Natural killer cell (primary cell): ENCODE measurements at regions of chr12 and their contacts with region 1.

Region 1: DNA sequence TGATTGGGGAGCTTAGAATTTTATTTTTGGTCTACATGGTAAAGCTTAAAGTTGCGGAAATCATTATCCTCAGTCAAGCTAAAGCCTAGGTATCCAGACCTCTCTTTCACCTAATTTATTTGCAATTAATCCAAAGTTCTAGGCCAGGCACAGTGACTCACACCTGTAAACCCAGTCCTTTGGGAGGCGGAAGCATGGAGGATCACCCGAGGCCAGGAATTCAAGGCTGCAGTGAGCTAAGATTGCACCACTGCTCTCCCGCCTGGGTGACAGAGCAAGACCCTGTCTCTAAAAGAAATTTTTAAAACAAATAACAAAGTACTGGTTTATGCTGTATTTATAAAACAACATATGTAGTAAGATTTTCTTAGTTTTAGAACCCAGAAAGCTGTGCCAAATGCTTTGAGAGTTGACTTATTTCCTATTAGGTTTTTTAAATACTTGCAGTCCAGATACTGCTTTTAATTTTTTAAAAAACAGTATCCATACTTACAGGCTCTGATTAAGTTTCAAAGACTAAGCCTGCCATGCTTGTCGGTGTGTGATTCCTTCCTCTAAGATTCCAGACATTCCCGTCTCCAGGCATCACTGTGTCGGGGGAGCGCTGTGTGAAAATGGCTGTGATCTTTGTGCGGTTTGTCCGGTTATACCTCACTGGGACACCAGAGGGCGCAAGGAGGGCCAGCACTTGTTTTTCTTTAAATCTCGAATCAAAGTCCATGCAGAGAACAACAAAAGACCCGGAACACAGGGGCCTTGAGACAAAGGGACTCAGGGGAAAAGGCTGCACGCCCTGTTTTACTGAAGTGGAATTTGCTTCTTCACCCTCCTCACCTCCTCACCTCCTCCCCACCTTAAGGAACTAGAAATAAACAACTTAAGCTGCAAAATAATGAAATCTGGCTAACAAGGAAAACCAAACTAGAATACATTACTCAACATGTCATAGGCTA is 24.6 kb upstream of the TMPO start:
- DNase-seq: peak; percentile 81 to 92
- ATAC-seq: peak; percentile 90 to 99 (median 98)
- H3K4me3 ChIP-seq: no peak overlapping the region
- H3K4me3 Mint-ChIP-seq: no peak overlapping the region
- H3K27ac ChIP-seq: peak overlapping the region; percentile 42
- H3K27ac Mint-ChIP-seq: peak overlapping the region; percentile 45 to 75
- H3K4me1 ChIP-seq: peaks cover 5% of the 10 kb centered on the region
- H3K4me1 Mint-ChIP-seq: peaks cover 0 to 4% of the 10 kb centered on the region in 2 donors
- H3K27me3 ChIP-seq: no peaks in the 10 kb centered on the region
- H3K27me3 Mint-ChIP-seq: peaks cover 2 to 4% of the 10 kb centered on the region in 2 donors
- CTCF ChIP-seq: peak; percentile 78

Region 2: DNA sequence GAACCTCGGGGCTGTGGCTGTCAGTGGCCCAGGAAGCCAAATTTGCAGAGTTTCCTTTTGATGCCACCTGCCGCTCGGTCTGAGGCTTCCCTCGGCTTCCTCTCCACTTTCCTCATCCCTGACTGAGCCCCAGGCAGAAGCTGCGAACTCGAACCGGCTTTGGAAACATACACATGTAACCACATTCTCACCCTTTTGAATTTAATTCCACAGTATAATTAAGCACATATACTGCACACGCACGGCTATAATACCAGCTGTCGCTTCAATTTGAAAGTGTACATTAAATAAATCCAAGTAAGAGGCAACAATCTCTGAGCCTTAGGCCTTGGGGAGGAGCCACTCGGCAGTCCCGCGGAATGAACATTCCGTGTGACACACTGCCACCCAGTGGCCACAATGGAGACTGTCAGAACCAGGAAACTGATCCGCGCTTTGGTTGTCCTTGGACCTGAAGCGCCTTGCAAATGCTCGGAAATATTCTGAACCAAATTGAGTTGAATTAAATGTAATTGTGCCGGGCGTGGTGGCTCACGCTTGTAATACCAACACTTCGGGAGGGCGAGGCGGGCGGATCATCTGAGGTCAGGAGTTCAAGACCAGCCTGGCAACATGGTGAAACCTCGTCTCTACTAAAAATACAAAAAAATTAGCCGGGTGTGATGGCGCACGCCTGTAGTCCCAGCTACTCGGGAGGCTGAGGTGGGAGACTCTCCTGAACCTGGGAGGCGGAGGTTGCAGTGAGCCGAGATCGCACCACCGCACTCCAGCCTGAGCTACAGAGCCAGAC is 93.3 kb before region 1 on chr12:
- intact Hi-C with region 1: no loop called
- DNase-seq: peak; percentile 69 to 90
- ATAC-seq: peak; percentile 91 to 97 (median 95)
- H3K4me3 ChIP-seq: peak overlapping the region; percentile 20
- H3K4me3 Mint-ChIP-seq: peak overlapping the region; percentile 94
- H3K27ac ChIP-seq: peak overlapping the region; percentile 5
- H3K27ac Mint-ChIP-seq: peak overlapping the region; percentile 57 to 82
- H3K4me1 ChIP-seq: peaks cover 21% of the 10 kb centered on the region
- H3K4me1 Mint-ChIP-seq: peaks cover 21 to 23% of the 10 kb centered on the region in 2 donors
- H3K27me3 ChIP-seq: no peaks in the 10 kb centered on the region
- H3K27me3 Mint-ChIP-seq: peaks cover 3 to 6% of the 10 kb centered on the region in 2 donors
- CTCF ChIP-seq: peak; percentile 82

Region 3: DNA sequence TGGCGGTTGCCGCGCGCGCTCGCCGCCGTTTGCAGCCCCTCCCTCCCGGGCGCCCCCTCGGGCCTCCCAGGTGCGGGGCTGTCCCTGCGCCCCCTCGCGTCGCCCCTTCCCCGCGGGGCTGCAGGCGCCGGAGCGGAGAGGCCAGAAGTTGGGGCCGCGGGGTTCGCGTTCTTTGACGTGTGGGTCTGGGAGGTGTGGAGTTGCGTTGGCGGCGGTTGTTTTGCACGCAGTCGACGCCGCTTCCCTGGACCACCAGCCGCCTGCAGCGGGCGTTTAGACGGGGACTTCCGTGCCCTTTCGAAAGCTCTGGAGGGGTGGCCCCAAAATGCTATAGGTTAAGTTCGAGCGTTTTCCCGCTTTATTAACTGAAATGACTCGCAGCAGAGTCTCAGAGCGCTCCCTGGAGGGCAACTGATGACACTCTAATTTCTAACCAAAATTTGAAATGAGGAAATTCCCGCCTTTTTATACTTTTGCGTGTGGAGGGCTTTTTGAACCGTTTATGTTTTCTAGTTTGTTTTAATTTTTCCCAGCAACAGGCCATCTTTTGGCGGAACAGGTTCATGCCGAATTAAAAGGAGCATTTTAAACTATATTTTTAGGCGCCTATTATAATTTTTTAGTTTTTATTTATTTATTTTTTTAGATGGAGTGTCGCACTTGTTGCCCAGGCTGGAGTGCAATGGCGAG is 25.6 kb after region 1 on chr12:
- intact Hi-C with region 1: loop called (anchors 1 kb)
- DNase-seq: peak; percentile 67 to 94
- ATAC-seq: peak; percentile 68 to 82 (median 69)
- H3K4me3 ChIP-seq: peak overlapping the region; percentile 49
- H3K4me3 Mint-ChIP-seq: peak overlapping the region; percentile 99
- H3K27ac ChIP-seq: peak overlapping the region; percentile 75
- H3K27ac Mint-ChIP-seq: peak overlapping the region; percentile 94 to 97
- H3K4me1 ChIP-seq: peaks cover 33% of the 10 kb centered on the region
- H3K4me1 Mint-ChIP-seq: peaks cover 31 to 36% of the 10 kb centered on the region in 2 donors
- H3K27me3 ChIP-seq: no peaks in the 10 kb centered on the region
- H3K27me3 Mint-ChIP-seq: no peaks in the 10 kb centered on the region
- CTCF ChIP-seq: peak; percentile 76

Region 4: DNA sequence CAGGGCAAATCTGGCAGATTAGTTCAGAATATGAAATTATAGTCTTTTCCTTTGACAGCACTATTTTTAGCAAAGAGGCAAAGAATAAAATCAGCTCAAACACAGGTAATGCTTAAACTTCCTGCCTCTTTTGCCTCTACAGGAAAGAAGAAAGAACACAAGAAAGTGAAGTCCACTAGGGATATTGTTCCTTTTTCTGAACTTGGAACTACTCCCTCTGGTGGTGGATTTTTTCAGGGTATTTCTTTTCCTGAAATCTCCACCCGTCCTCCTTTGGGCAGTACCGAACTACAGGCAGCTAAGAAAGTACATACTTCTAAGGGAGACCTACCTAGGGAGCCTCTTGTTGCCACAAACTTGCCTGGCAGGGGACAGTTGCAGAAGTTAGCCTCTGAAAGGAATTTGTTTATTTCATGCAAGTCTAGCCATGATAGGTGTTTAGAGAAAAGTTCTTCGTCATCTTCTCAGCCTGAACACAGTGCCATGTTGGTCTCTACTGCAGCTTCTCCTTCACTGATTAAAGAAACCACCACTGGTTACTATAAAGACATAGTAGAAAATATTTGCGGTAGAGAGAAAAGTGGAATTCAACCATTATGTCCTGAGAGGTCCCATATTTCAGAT is 42.0 kb after region 1 on chr12:
- intact Hi-C with region 1: loop called (anchors 1 kb)
- DNase-seq: peak in 1 of 2 donors; percentile 72
- ATAC-seq: peak in 2 of 3 donors; percentile 50 to 61
- H3K4me3 ChIP-seq: no peak overlapping the region
- H3K4me3 Mint-ChIP-seq: no peak overlapping the region
- H3K27ac ChIP-seq: no peak overlapping the region
- H3K27ac Mint-ChIP-seq: peak overlapping the region in 1 of 2 donors; percentile 40
- H3K4me1 ChIP-seq: no peaks in the 10 kb centered on the region
- H3K4me1 Mint-ChIP-seq: peaks cover 4 to 22% of the 10 kb centered on the region in 2 donors
- H3K27me3 ChIP-seq: no peaks in the 10 kb centered on the region
- H3K27me3 Mint-ChIP-seq: no peaks in the 10 kb centered on the region
- CTCF ChIP-seq: peak; percentile 74

Region 5: GRCh38 chr12:98653866-98654493 is 163.2 kb after region 1 on chr12:
- intact Hi-C with region 1: loop called (anchors 2 kb)
- DNase-seq: peak in 1 of 2 donors; percentile 76
- ATAC-seq: peak; percentile 52 to 80 (median 69)
- H3K4me3 ChIP-seq: no peak overlapping the region
- H3K4me3 Mint-ChIP-seq: no peak overlapping the region
- H3K27ac ChIP-seq: no peak overlapping the region
- H3K27ac Mint-ChIP-seq: peak overlapping the region in 1 of 2 donors; percentile 13
- H3K4me1 ChIP-seq: no peaks in the 10 kb centered on the region
- H3K4me1 Mint-ChIP-seq: peaks cover 5 to 13% of the 10 kb centered on the region in 2 donors
- H3K27me3 ChIP-seq: no peaks in the 10 kb centered on the region
- H3K27me3 Mint-ChIP-seq: no peaks in the 10 kb centered on the region
- CTCF ChIP-seq: peak; percentile 68